GM12878 (cell line): ENCODE measurements at regions of chr13 and their contacts with region 1.

Region 1: GRCh38 chr13:36282818-36283445 is 14.7 kb downstream of the CCDC169 start:
- DNase-seq: no peak
- ATAC-seq: peak; percentile 70
- H3K4me3 ChIP-seq: no peak overlapping the region
- H3K27ac ChIP-seq: no peak overlapping the region
- H3K4me1 ChIP-seq: no peaks in the 10 kb centered on the region
- H3K27me3 ChIP-seq: no peaks in the 10 kb centered on the region
- CTCF ChIP-seq: peak; percentile 61 to 80 (median 68)
- EP300 ChIP-seq: no peak
- POLR2A ChIP-seq: no peak
- RAD21 ChIP-seq: peak; percentile 84

Region 2: DNA sequence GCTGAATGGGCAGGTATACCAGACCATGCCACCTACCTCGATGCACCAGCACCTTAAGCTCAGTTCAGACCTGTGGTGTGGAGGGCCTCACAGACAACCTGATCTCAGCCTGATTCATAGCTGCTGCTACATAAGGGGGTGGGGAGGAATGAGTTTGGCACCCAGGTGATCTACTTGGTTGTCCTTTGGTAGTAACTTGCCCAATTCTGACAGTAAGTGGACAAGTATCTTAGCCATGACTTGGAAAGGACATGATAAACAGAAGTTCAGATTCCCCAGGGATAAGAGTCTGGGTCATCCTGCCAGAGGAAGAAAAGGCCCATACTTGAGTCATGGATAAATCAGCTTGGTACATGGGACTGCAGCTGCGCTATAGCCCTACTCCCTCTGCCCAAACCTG is 40.2 kb before region 1 on chr13:
- CTCF ChIA-PET with region 1: no interaction called
- POLR2A ChIA-PET with region 1: no interaction called
- RAD21 ChIA-PET with region 1: no interaction called
- SMC1A ChIA-PET with region 1: no interaction called
- in situ Hi-C with region 1: no loop called
- intact Hi-C with region 1: no loop called
- DNase-seq: no peak
- ATAC-seq: no peak
- H3K4me3 ChIP-seq: no peak overlapping the region
- H3K27ac ChIP-seq: no peak overlapping the region
- H3K4me1 ChIP-seq: no peaks in the 10 kb centered on the region
- H3K27me3 ChIP-seq: no peaks in the 10 kb centered on the region
- CTCF ChIP-seq: no peak
- EP300 ChIP-seq: no peak
- POLR2A ChIP-seq: no peak
- RAD21 ChIP-seq: no peak

Region 3: GRCh38 chr13:36294096-36294495 is 11.2 kb after region 1 on chr13:
- CTCF ChIA-PET with region 1: interaction called, 12 read pairs
- POLR2A ChIA-PET with region 1: no interaction called
- RAD21 ChIA-PET with region 1: no interaction called
- SMC1A ChIA-PET with region 1: interaction called, 10 read pairs
- in situ Hi-C with region 1: no loop called
- intact Hi-C with region 1: no loop called
- DNase-seq: no peak
- ATAC-seq: no peak
- H3K4me3 ChIP-seq: no peak overlapping the region
- H3K27ac ChIP-seq: no peak overlapping the region
- H3K4me1 ChIP-seq: no peaks in the 10 kb centered on the region
- H3K27me3 ChIP-seq: peaks cover 0 to 8% of the 10 kb centered on the region in 2 experiments; a peak in 2 of 4 replicates
- CTCF ChIP-seq: no peak
- EP300 ChIP-seq: no peak
- POLR2A ChIP-seq: no peak
- RAD21 ChIP-seq: no peak

Region 4: GRCh38 chr13:36395280-36395679 is 112.3 kb after region 1 on chr13:
- CTCF ChIA-PET with region 1: interaction called, 62 read pairs
- POLR2A ChIA-PET with region 1: interaction called, 4 read pairs
- RAD21 ChIA-PET with region 1: interaction called, 25 read pairs
- SMC1A ChIA-PET with region 1: interaction called, 10 read pairs
- in situ Hi-C with region 1: no loop called
- intact Hi-C with region 1: loop called (anchors 1 kb)
- DNase-seq: no peak
- ATAC-seq: peak; percentile 91
- H3K4me3 ChIP-seq: no peak overlapping the region
- H3K27ac ChIP-seq: no peak overlapping the region
- H3K4me1 ChIP-seq: no peaks in the 10 kb centered on the region
- H3K27me3 ChIP-seq: no peaks in the 10 kb centered on the region
- CTCF ChIP-seq: peak; percentile 13 to 59 (median 26); a peak in 3 of 6 replicates
- EP300 ChIP-seq: no peak
- POLR2A ChIP-seq: no peak
- RAD21 ChIP-seq: peak; percentile 42

Region 5: GRCh38 chr13:36475468-36475867 is 192.5 kb after region 1 on chr13:
- CTCF ChIA-PET with region 1: no interaction called
- POLR2A ChIA-PET with region 1: no interaction called
- RAD21 ChIA-PET with region 1: no interaction called
- SMC1A ChIA-PET with region 1: interaction called, 4 read pairs
- in situ Hi-C with region 1: no loop called
- intact Hi-C with region 1: loop called (anchors 5 kb)
- DNase-seq: no peak
- ATAC-seq: 0 out of 3 replicates have a peak, but pooled peaks have one; percentile 35
- H3K4me3 ChIP-seq: no peak overlapping the region
- H3K27ac ChIP-seq: no peak overlapping the region
- H3K4me1 ChIP-seq: no peaks in the 10 kb centered on the region
- H3K27me3 ChIP-seq: no peaks in the 10 kb centered on the region
- CTCF ChIP-seq: peak in 1 of 3 experiments; percentile 42; a peak in 2 of 6 replicates
- EP300 ChIP-seq: no peak
- POLR2A ChIP-seq: no peak
- RAD21 ChIP-seq: peak; percentile 38; the same call in 1 of the 2 replicates

Region 6: DNA sequence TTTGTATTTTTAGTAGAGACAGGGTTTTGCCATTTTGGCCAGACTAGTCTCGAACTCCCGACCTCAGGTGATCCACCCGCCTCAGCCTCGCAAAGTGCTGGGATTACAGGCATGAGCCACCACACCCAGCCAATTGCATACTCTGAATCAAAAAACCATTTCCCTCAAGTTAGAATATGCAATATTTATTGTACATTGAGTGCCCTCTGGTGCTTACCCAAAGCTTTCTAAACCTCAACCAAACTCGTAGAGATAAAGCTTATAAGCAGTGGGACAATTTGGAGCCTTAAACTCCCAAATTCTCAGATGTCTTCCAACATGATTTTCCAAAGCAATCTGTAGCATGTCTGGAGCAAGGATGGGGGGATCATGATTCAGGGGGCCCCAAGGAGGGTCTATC is 558.5 kb after region 1 on chr13:
- CTCF ChIA-PET with region 1: interaction called, 10 read pairs
- POLR2A ChIA-PET with region 1: no interaction called
- RAD21 ChIA-PET with region 1: interaction called, 3 read pairs
- SMC1A ChIA-PET with region 1: no interaction called
- in situ Hi-C with region 1: no loop called
- intact Hi-C with region 1: no loop called
- DNase-seq: no peak
- ATAC-seq: no peak
- H3K4me3 ChIP-seq: no peak overlapping the region
- H3K27ac ChIP-seq: no peak overlapping the region
- H3K4me1 ChIP-seq: no peaks in the 10 kb centered on the region
- H3K27me3 ChIP-seq: no peaks in the 10 kb centered on the region
- CTCF ChIP-seq: peak in 1 of 3 experiments; percentile 27; a peak in 2 of 6 replicates
- EP300 ChIP-seq: no peak
- POLR2A ChIP-seq: no peak
- RAD21 ChIP-seq: peak; percentile 33